Activated CD4-positive, alpha-beta T cell treated with anti-CD3 and anti-CD28 coated beads for 36 hours (primary cell): ENCODE measurements at regions of chr1 and their contacts with region 1.

Region 1: DNA sequence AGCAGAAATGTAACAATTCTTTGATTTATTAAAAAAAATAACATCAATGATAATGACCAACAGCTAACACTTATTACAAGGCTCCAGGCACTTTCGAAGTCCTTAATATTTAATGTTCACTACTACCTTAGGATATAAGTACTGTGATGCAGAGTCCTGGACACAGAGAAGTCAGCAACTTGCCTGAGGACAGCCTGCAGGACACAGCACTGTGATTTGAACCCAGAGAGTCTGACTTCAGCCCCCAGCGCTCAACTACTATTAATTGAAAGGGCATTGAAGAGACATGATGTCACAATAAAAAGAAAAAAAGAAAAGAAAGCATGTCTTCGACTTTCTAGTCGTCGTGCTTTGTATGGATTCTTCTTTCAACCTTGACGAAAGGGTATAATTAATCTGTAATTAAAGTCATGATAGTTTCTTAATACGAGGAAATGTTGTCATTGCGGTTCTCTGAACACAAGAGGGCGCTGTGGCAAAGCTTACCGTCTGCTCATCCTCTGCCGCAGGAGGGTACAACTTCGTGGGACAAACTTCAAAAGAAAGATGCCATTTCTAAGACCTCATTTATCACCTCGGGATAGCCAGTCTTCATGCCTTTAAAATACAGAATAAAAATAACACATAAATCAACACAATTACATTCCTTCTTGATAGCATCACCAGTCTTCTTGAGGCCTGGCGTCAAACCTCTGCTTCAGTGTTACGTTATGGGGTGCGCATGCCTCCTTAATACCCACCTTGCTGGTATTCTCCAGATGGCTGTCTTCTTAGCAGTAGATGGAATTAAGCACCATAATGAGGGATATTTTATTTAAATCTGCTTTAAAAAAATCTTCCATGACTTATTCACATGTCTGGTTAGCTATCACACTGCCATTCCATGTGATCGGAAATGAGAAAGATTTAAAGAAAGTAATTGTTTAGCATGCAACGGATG is 240.1 kb downstream of the DISC1 start:
- DNase-seq: peak; percentile 77
- ATAC-seq: peak; percentile 36
- H3K4me3 Mint-ChIP-seq: no peak overlapping the region
- H3K27ac Mint-ChIP-seq: no peak overlapping the region
- H3K4me1 Mint-ChIP-seq: peaks cover 26% of the 10 kb centered on the region
- H3K27me3 Mint-ChIP-seq: no peaks in the 10 kb centered on the region

Region 2: DNA sequence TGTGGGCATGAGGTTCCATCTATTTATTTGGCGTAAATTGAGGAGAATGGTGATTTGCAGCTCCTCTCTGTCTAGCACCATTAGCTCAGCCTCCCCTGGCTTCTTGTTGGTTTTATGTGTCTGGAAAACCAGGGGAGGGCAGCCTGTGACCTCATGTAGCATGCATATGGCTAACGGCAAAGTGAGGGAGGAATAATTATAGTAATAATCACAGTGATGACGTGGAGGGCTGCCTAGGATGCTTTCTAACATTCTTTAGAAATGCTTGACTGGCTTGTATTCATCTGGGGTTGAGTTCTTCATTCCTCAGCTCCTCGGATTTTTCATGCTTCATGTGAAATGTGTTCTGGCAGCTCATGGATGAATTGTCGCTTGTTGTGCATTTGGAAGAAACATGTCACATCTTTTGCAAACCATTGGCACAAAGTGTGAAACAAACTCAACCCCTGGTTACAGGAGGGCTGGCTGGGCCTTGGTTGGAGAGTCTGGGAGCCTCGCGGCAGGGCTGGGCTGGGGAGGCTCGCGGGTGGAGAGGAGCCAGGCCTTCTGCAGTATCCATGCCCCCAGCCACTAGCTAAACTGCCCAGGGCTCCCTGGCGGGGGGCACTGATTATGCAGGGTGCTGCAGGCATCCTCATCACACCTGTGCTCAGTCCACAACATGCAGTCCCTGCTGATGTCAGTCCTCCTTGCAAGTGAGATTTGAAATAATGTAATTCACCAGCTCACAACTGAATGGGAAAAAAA is 90.5 kb before region 1 on chr1:
- CTCF ChIA-PET with region 1: no interaction called
- POLR2A ChIA-PET with region 1: no interaction called
- intact Hi-C with region 1: no loop called
- DNase-seq: no peak
- ATAC-seq: no peak
- H3K4me3 Mint-ChIP-seq: no peak overlapping the region
- H3K27ac Mint-ChIP-seq: no peak overlapping the region
- H3K4me1 Mint-ChIP-seq: no peaks in the 10 kb centered on the region
- H3K27me3 Mint-ChIP-seq: no peaks in the 10 kb centered on the region

Region 3: DNA sequence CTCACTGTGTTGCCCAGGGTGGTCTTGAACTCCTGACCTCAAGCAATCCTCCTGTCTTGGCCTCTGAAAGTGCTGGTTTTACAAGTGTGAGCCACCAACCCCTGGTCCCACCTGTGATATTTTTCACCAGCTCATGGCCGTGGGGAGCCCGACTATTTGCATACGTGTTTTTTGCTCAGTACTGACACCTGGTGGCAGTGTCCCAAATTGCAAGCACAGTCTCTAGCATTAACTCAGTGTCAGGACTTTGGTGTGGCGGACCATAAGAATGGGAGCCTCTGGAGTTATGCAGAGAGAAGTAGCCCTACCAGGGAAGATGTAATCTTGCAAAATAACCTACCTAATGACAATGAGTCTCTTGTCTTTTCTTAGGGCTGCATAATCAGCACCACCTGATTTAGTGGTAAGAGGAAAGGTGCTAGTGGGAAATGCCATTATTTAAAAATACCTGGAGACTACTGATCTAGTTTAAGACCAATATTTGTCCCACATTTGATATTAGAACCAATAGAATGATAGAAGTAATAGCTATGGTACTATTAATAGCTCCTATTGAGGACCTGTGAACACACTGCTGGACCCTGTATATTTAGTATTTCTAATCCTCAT is 65.3 kb after region 1 on chr1:
- CTCF ChIA-PET with region 1: interaction called, 22 read pairs
- POLR2A ChIA-PET with region 1: no interaction called
- intact Hi-C with region 1: loop called (anchors 2 to 5 kb)
- DNase-seq: peak; percentile 71
- ATAC-seq: peak; percentile 39
- H3K4me3 Mint-ChIP-seq: no peak overlapping the region
- H3K27ac Mint-ChIP-seq: no peak overlapping the region
- H3K4me1 Mint-ChIP-seq: peaks cover 20% of the 10 kb centered on the region
- H3K27me3 Mint-ChIP-seq: no peaks in the 10 kb centered on the region

Region 4: DNA sequence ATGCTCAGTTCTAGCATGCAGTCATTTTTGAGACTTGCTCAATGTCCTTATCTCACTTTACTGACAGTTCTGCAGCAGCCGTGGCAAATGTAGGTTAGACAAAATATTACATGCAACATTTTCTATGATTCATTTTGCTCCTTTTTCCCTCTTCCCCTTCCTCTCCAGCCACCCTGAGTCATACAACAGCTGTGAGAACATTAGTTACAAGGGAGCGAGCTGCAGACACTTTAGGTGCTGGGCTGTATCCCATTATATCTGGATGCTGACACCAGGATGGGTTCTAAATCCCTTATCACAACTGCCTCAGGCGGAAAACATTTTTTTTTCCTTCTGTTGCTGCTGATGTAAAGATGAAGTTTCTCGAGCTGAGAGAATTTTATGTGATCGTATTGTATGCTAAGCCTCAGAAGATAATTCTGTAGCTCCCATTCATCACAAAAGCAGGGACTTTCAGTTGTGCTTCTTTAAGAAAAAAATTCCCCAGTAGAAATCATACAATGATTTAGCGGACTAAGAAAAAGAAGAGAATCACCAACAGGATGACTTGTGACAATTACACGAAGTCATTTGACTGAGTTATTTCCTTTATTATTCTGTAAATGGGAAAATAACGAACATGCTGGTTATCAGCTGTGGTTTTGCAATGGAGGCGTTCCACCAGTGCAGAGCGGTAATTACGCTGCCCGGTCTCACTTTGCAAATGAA is 104.9 kb after region 1 on chr1:
- CTCF ChIA-PET with region 1: no interaction called
- POLR2A ChIA-PET with region 1: no interaction called
- intact Hi-C with region 1: loop called in 1 of 2 experiments (anchors 5 kb)
- DNase-seq: no peak
- ATAC-seq: no peak
- H3K4me3 Mint-ChIP-seq: no peak overlapping the region
- H3K27ac Mint-ChIP-seq: no peak overlapping the region
- H3K4me1 Mint-ChIP-seq: peaks cover 21% of the 10 kb centered on the region
- H3K27me3 Mint-ChIP-seq: no peaks in the 10 kb centered on the region

Region 5: DNA sequence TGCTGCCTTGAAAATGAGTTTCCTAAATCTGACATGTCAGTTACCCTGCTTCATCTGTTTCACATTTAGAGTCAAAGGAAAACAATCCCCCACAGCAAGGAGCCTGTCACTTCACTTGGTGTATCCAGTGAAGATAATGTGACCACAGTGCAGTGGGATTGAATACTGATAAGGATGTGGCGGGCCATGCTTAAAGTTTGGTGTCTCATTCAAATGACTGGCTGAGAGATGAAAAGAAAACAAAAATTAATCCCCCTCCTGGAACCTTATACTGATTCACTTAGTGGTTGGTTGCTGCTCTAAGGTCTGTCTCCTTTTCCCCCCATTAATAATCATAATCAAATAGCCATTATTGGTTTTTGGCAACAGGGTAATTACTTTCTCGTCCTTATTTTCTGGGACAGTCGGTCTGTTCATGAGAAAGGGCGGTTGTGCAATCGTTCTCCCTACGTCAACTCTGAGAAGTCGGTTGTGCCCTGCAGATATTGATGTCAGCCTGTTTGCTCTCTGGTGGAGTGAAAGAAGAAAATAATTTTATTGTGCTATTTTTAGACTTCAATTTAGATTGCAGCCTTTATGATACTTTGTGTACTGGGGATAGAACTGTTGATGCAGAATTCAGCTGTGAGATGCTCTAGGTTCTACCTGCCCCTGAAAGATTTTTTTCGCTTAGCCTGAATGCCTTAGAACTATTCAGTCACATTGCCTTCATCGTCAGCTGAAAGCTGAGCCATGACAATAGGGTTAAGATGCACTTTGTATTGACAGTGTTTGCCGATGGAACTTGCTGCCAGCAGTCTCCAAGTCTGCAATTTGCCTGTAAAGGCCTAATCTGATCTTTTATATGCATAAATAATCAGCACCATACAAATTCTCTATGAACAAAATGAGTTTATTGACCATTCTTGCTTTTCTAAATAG is 120.2 kb after region 1 on chr1:
- CTCF ChIA-PET with region 1: interaction called, 5 read pairs
- POLR2A ChIA-PET with region 1: no interaction called
- intact Hi-C with region 1: loop called in 1 of 2 experiments (anchors 5 kb)
- DNase-seq: no peak
- ATAC-seq: no peak
- H3K4me3 Mint-ChIP-seq: no peak overlapping the region
- H3K27ac Mint-ChIP-seq: no peak overlapping the region
- H3K4me1 Mint-ChIP-seq: peaks cover 4% of the 10 kb centered on the region
- H3K27me3 Mint-ChIP-seq: no peaks in the 10 kb centered on the region

Region 6: GRCh38 chr1:232044728-232045127 is 178.1 kb after region 1 on chr1:
- CTCF ChIA-PET with region 1: no interaction called
- POLR2A ChIA-PET with region 1: no interaction called
- intact Hi-C with region 1: no loop called
- DNase-seq: no peak
- ATAC-seq: no peak
- H3K4me3 Mint-ChIP-seq: no peak overlapping the region
- H3K27ac Mint-ChIP-seq: no peak overlapping the region
- H3K4me1 Mint-ChIP-seq: peaks cover 8% of the 10 kb centered on the region
- H3K27me3 Mint-ChIP-seq: peaks cover 5% of the 10 kb centered on the region

Region 7: DNA sequence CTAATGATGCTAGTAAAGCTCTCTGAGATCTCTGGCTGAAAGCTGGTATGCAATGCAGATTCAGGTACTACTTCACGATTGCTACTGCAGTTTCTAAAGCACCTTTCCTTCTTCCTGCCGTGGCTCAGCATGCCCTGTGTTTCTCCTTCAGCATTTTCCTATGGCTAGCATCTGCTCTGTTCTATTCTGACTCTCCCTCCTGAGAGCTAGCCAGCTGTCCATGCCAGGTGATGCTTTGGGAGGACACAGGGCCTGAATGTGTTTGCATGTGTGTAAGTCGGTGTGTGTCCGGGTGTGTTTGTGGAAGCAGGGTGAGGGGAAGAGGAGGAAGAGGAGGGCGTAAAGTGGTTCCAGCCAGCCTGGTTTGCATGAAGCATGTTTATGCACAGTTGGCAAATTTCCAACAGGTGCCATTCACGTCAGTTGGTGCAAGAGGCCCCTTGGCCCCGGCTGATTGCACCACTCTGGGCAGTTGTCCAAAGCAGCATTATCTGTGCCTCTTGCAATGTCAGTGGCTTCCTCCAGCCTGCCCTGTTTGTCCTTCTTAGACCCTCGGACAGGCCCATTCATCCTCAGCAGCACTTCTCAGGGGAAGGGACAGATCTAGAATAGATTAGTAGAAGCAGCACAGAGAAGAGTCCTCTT is 193.2 kb after region 1 on chr1:
- CTCF ChIA-PET with region 1: no interaction called
- POLR2A ChIA-PET with region 1: no interaction called
- intact Hi-C with region 1: loop called in 1 of 2 experiments (anchors 10 kb)
- DNase-seq: no peak
- ATAC-seq: no peak
- H3K4me3 Mint-ChIP-seq: no peak overlapping the region
- H3K27ac Mint-ChIP-seq: no peak overlapping the region
- H3K4me1 Mint-ChIP-seq: no peaks in the 10 kb centered on the region
- H3K27me3 Mint-ChIP-seq: no peaks in the 10 kb centered on the region

Region 8: GRCh38 chr1:233025157-233025915 is 1158.7 kb after region 1 on chr1:
- CTCF ChIA-PET with region 1: no interaction called
- POLR2A ChIA-PET with region 1: no interaction called
- intact Hi-C with region 1: loop called in 1 of 2 experiments (anchors 10 kb)
- DNase-seq: peak; percentile 34
- ATAC-seq: no peak
- H3K4me3 Mint-ChIP-seq: no peak overlapping the region
- H3K27ac Mint-ChIP-seq: no peak overlapping the region
- H3K4me1 Mint-ChIP-seq: no peaks in the 10 kb centered on the region
- H3K27me3 Mint-ChIP-seq: no peaks in the 10 kb centered on the region

Region 9: GRCh38 chr1:233127157-233127556 is 1260.5 kb after region 1 on chr1:
- CTCF ChIA-PET with region 1: no interaction called
- POLR2A ChIA-PET with region 1: no interaction called
- intact Hi-C with region 1: no loop called
- DNase-seq: no peak
- ATAC-seq: no peak
- H3K4me3 Mint-ChIP-seq: no peak overlapping the region
- H3K27ac Mint-ChIP-seq: no peak overlapping the region
- H3K4me1 Mint-ChIP-seq: no peaks in the 10 kb centered on the region
- H3K27me3 Mint-ChIP-seq: no peaks in the 10 kb centered on the region